Activated B cell treated with CpG ODN at 0.5 μM for 24 hours (primary cell): ENCODE measurements at regions of chr17 and their contacts with region 1.

Region 1: GRCh38 chr17:41801374-41802271 is 10.1 kb downstream of the P3H4 start:
- DNase-seq: peak; percentile 68
- ATAC-seq: peak; percentile 87
- H3K4me3 Mint-ChIP-seq: no peak overlapping the region
- H3K27ac Mint-ChIP-seq: no peak overlapping the region
- H3K4me1 Mint-ChIP-seq: peaks cover 17% of the 10 kb centered on the region
- H3K27me3 Mint-ChIP-seq: no peaks in the 10 kb centered on the region
- CTCF ChIP-seq: peak; percentile 77

Region 2: DNA sequence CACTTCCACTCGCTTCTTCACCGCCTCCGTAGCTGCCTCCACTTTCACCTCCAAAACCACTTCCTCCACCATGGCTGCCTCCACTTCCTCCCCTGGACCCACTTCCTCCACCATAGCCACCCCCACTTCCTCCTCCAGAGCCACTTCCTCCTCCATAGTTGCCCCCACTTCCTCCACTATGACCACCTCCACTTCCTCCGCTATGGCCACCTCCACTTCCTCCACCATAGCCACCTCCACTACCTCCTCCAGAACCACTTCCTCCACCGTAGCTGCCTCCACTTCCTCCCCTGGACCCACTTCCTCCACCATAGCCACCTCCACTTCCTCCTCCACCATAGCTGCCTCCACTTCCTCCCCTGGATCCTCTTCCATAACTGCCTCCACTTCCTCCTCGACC is 234.3 kb before region 1 on chr17:
- CTCF ChIA-PET with region 1: no interaction called
- POLR2A ChIA-PET with region 1: no interaction called
- intact Hi-C with region 1: no loop called
- DNase-seq: no peak
- ATAC-seq: no peak
- H3K4me3 Mint-ChIP-seq: no peak overlapping the region
- H3K27ac Mint-ChIP-seq: peak overlapping the region; percentile 54
- H3K4me1 Mint-ChIP-seq: peaks cover 3% of the 10 kb centered on the region
- H3K27me3 Mint-ChIP-seq: peaks cover 17% of the 10 kb centered on the region
- CTCF ChIP-seq: no peak

Region 3: DNA sequence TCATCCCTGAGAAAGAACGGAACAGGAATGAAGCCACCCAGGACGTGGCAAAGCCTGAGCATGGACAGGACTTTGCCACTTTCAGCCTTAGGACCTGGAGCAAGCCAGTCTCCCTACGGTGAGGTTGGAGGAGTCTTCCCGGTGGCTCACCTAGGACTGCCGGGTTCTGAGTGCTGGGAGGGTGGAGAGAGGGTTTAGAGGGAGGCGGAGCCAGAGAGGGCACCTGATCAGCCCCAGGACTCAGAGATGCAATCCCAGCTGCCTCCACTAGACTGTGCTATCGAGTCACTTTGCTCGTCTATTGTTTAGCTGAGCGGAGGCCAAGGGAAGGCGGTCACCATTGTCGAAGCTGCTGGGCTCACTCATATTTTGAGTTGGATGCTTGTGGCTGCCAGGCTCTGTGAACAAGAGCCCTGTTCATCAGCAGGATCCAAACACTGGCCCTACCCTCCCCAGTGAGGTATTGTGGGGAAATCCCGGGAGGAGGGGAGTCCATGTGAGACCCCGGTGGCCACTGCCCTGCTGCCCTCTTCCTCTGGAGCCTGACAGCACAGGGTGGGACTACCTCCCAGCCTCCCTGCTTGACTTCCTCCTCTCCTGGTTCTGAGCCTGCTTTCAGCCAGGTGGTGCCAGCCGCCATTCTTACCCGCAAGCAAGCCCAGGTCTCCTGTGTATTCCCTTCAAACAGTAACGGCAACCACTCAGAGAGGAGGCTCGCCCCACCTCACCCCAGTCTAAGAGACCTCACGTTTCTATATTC is 222.0 kb before region 1 on chr17:
- CTCF ChIA-PET with region 1: no interaction called
- POLR2A ChIA-PET with region 1: no interaction called
- intact Hi-C with region 1: no loop called
- DNase-seq: no peak
- ATAC-seq: peak; percentile 66
- H3K4me3 Mint-ChIP-seq: no peak overlapping the region
- H3K27ac Mint-ChIP-seq: no peak overlapping the region
- H3K4me1 Mint-ChIP-seq: no peaks in the 10 kb centered on the region
- H3K27me3 Mint-ChIP-seq: peaks cover 44% of the 10 kb centered on the region
- CTCF ChIP-seq: no peak

Region 4: GRCh38 chr17:41705271-41705991 is 96.2 kb before region 1 on chr17:
- CTCF ChIA-PET with region 1: no interaction called
- POLR2A ChIA-PET with region 1: no interaction called
- intact Hi-C with region 1: no loop called
- DNase-seq: no peak
- ATAC-seq: no peak
- H3K4me3 Mint-ChIP-seq: no peak overlapping the region
- H3K27ac Mint-ChIP-seq: no peak overlapping the region
- H3K4me1 Mint-ChIP-seq: no peaks in the 10 kb centered on the region
- H3K27me3 Mint-ChIP-seq: peaks cover 6% of the 10 kb centered on the region
- CTCF ChIP-seq: no peak

Region 5: GRCh38 chr17:41786227-41787020 is 15.2 kb before region 1 on chr17 and contains the start of gene JUP:
- CTCF ChIA-PET with region 1: interaction called, 17 read pairs
- POLR2A ChIA-PET with region 1: interaction called, 5 read pairs
- intact Hi-C with region 1: loop called (anchors 1 kb)
- DNase-seq: peak; percentile 98
- ATAC-seq: peak; percentile 94
- H3K4me3 Mint-ChIP-seq: peak within 1 kb of the TSS; percentile 78
- H3K27ac Mint-ChIP-seq: peak within 1 kb of the TSS; percentile 75
- H3K4me1 Mint-ChIP-seq: peaks cover 57% of the 10 kb centered on the region
- H3K27me3 Mint-ChIP-seq: no peaks in the 10 kb centered on the region
- CTCF ChIP-seq: no peak
- total RNA-seq, gene JUP: 27.3 and 31.1 TPM in 2 replicates

Region 6: GRCh38 chr17:41811549-41812380 is 10.1 kb after region 1 on chr17 and contains the start of gene P3H4:
- CTCF ChIA-PET with region 1: interaction called, 11 read pairs
- POLR2A ChIA-PET with region 1: interaction called, 3 read pairs
- intact Hi-C with region 1: no loop called
- DNase-seq: peak; percentile 79
- ATAC-seq: peak; percentile 94
- H3K4me3 Mint-ChIP-seq: peak within 1 kb of the TSS; percentile 87
- H3K27ac Mint-ChIP-seq: peak within 1 kb of the TSS; percentile 66
- H3K4me1 Mint-ChIP-seq: peaks cover 15% of the 10 kb centered on the region
- H3K27me3 Mint-ChIP-seq: peaks cover 9% of the 10 kb centered on the region
- CTCF ChIP-seq: no peak
- total RNA-seq, gene P3H4: 0.76 and 1.9 TPM in 2 replicates